ENCODE measurements at regions of chr6 and their contacts with region 1.

Region 1: DNA sequence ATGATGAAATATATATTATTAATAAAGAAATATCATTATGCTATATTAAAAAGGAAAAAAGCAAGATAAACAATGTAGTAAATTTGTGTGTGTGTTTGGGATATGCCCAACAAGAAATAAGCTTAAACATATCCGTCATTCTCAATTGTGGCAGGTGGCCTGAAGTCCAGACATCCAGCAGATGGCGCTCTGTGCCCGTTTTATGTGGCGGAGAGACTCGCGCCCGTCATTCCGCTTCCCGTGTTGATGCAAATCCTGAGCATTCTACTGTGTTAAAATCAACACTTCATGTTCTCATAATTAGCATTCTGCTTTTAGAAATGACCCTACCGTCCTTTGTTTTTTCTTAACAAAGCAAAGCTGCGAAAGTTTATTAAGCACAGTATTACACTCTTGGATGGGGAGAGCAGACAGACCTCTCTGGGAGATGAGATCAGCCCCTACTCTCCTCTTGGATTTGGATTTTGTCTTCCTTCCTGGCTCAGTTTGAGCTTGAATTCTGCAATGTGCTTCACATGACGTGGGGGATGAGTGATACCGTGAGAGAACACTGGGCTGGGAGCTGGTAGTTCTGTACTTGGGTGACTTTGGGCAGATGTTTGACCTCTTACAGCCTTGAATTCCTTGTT is 125.8 kb downstream of the MCHR2 start:
- DNase-seq: peak; percentile 77
- ATAC-seq: peak; percentile 51
- H3K4me3 Mint-ChIP-seq: no peak overlapping the region
- H3K27ac Mint-ChIP-seq: no peak overlapping the region
- H3K4me1 Mint-ChIP-seq: peaks cover 3% of the 10 kb centered on the region
- H3K27me3 Mint-ChIP-seq: peaks cover 55% of the 10 kb centered on the region

Region 2: DNA sequence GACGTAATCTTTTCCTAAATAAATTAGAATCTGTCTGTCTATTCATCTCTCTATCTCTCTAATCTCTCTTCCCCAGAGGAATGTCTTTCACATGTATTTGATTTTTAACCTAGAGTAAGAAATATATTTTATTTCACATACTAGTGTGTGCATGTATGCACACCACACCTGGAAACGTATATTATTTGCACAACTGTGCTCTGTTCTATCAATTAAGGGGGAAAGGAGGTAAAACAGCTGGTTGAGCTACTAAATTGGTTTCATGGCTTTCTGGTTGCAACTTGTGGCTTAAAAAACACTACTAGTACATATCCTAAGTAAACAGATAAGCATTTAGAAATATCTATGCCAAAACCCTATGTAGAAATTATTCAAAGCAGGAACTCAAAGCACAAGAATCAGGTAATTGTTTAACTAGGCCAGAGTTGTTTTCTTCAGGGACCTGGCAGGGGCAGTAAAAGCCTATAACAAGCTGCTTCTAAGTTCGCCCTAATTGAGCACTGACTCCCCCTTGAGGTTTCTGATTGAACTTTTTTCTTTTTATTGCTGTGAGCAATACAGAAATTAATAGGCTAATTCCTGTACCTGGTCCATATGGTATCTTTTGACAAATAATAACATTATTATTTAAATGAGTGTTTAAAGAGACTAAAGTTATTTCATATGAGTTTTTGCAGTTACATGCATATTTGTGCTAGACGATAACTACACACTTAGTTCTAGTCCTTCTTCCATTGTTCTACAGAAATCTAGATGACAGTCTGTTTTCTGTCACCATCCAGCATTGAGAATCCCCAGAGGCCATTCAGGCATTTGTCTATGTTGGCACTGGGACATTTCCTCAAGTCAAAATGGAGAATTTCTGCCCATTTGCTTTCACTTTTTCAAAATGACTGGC is 37.3 kb after region 1 on chr6:
- CTCF ChIA-PET with region 1: interaction called, 13 read pairs
- DNase-seq: no peak
- ATAC-seq: peak; percentile 49
- H3K4me3 Mint-ChIP-seq: no peak overlapping the region
- H3K27ac Mint-ChIP-seq: no peak overlapping the region
- H3K4me1 Mint-ChIP-seq: no peaks in the 10 kb centered on the region
- H3K27me3 Mint-ChIP-seq: peaks cover 26% of the 10 kb centered on the region

Region 3: DNA sequence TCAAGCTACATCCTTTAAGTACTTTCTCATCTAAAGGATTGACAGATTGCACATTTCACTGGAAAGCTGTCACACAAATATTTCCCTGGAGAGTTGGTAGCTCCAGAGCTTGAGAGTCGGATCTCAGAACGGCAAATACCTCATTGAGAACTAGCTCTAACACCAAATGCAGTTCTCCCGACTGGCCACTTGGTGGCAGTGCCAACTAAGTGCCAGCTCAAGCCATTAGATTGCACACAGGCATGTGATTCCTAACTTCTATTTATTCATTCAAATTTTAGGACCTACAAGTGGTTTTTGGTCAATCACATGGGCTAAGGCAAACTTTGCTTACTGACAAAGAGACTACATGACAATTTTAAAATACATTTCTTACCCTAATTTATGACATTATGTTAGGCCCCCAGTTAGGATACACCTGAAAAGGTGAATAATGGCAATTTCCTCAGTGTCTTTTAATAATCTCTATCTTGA is 133.8 kb after region 1 on chr6:
- CTCF ChIA-PET with region 1: interaction called, 19 read pairs
- DNase-seq: peak; percentile 58
- ATAC-seq: peak; percentile 53
- H3K4me3 Mint-ChIP-seq: no peak overlapping the region
- H3K27ac Mint-ChIP-seq: no peak overlapping the region
- H3K4me1 Mint-ChIP-seq: no peaks in the 10 kb centered on the region
- H3K27me3 Mint-ChIP-seq: peaks cover 40% of the 10 kb centered on the region

Region 4: DNA sequence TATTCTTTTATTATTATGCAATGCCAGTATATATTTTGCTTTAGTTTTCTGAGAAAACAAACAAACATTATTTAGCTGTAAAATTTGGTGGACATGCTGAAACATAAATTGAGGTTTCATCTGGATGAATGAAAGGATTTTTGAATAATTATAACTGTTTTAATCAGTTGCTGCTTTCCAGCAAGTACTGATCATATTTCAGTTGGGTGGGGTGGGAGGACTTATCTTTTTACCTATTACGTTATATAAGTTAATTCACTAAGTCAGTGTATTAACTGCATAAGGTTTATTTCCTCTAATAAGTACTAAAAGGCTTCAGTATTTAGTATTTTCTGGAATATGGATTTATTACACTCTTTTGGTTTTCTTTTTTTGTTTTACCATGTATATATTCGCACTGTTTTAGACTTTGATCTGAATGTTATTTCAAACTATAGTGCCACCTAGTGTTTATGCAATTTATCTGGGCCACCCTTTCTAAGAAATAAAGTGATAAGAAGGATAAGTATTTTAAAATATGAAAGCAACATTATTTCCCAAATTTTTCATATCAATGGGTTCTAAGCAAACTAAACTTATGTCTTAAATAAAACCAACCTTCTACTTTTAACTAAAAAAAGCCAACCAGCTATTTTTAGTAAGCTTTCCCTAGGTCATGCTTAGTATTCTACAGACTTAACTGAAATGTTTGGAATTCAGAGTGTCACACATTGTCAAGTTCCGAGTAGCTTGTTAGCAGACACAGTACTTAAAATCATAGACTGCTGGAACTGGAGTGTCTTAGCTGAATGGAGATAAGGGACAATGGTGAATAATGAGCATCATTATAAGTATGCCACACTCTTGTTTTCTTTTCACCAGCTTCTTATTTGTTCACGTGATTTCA is 231.2 kb after region 1 on chr6:
- CTCF ChIA-PET with region 1: interaction called, 31 read pairs
- DNase-seq: no peak
- ATAC-seq: no peak
- H3K4me3 Mint-ChIP-seq: no peak overlapping the region
- H3K27ac Mint-ChIP-seq: no peak overlapping the region
- H3K4me1 Mint-ChIP-seq: no peaks in the 10 kb centered on the region
- H3K27me3 Mint-ChIP-seq: peaks cover 44% of the 10 kb centered on the region

Measured in activated CD8-positive, alpha-beta memory T cell treated with anti-CD3 and anti-CD28 coated beads, Interleukin-2, amount 10 ng/mL, durations not matched to agents 7 days and 5 days (primary cell).